ENCODE measurements at regions of chr13 and their contacts with region 1.

Region 1: DNA sequence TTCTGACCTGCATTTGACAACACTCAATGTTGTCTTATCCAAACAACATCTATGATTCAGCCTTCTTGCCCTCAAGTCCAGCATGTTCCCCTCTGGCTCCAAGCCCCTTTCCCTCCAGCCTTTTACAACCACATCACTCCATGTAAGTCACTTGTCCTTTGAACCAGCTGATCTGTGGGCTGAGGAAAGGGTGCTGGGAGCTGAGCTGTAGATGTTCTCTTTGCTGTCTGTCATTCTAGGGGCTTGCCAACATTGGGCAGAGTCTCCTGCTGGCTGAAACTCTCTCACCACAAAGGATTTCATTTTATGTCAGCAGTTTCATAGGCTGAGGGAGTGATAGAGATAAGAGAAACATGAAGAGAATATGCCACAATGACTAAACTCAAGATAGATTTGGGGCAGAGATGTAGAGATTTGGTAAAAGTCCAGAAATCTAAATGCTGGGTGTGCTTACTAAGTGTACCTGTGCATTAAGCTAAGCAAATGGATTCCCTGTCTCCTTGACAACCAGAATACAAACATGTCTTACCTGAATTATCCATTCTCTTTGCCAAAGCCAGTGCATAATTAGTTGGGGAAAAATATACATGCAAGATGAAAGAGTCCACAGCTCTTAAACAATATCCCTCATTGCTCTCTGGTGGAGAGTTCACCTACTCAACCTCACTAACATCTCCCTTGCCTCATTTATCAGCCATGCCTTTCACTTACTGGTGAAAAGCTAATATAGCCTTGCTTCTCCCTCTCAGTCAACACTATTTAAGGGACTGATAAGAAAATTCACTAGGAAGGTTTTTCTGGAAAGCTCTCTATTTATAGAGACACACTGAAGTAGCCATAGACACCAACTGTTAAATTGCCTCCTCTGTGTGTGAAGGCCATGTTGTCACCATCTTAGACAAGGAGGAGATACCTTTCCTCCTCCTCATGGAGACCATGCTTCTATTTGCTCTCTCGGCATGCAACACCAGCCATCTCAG is 175.5 kb upstream of the SERP2 start:
- DNase-seq: peak; percentile 50
- H3K4me3 Mint-ChIP-seq: no peak overlapping the region
- H3K27ac Mint-ChIP-seq: peak overlapping the region; percentile 37
- H3K4me1 Mint-ChIP-seq: peaks cover 47% of the 10 kb centered on the region
- H3K27me3 Mint-ChIP-seq: peaks cover 32% of the 10 kb centered on the region

Region 2: DNA sequence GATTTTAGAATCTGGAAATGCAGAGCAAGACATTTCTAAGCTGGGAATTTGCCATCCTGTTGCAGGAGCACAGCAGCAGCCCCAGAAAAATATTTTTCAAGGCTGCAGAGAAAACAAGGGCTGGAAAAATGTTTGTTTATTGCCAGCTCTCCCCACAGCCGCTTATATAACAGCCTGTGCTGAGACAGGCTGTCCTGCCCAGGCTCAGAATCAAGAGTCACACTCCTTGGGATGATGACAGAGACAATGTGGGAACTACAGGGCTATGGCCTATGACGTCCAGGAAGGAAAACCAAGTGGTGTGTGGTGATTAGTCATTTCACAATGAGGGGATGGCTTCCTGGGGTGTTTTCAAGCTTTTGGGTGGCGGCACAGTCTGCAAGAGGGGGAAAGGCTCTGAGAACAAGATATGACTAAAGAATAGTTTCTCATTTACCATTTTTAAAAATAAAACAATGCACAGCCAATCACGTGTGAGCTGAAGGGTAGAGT is 39.2 kb after region 1 on chr13:
- intact Hi-C with region 1: loop called (anchors 2 kb)
- DNase-seq: no peak
- H3K4me3 Mint-ChIP-seq: peak overlapping the region; percentile 37
- H3K27ac Mint-ChIP-seq: no peak overlapping the region
- H3K4me1 Mint-ChIP-seq: peaks cover 15% of the 10 kb centered on the region
- H3K27me3 Mint-ChIP-seq: peaks cover 42% of the 10 kb centered on the region

Region 3: GRCh38 chr13:44300895-44301638 is 103.0 kb after region 1 on chr13:
- intact Hi-C with region 1: loop called (anchors 1 kb)
- DNase-seq: no peak
- H3K4me3 Mint-ChIP-seq: peak overlapping the region; percentile 5
- H3K27ac Mint-ChIP-seq: peak overlapping the region; percentile 27
- H3K4me1 Mint-ChIP-seq: peaks cover 51% of the 10 kb centered on the region
- H3K27me3 Mint-ChIP-seq: peaks cover 3% of the 10 kb centered on the region

Region 4: DNA sequence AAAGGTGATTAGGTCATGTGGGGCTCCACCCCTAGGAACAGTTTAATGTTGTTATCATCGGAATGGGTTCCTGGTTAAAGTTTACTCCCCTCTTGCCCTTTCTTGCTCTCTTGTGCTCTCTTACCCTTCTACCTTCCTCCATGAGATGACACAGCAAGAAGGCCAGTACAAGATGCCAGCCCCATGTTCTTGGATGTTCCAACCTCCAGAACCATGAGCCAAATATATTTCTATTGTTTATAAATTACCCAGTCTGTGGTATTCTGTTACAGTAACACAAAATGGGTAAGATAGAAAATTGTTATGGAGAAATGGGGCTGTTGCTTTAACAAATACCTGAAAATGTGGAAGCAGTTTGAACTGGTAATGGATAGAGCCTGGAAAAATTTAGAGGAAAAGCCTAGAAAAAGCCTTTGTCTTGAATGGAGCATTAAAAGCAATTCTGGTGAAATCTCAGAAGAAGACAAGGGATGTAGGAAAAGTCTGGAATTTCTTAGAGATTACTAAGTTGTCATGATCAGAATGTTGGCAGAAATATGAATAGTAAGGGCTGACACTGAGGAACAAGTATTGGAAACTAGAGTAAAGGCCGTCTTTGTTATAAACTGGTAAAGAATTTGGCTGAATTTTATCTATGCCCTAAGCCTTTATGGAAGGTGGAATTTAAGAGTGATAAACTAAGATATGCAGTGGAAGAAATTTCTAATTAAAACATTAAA is 431.5 kb after region 1 on chr13:
- intact Hi-C with region 1: no loop called
- DNase-seq: no peak
- H3K4me3 Mint-ChIP-seq: no peak overlapping the region
- H3K27ac Mint-ChIP-seq: no peak overlapping the region
- H3K4me1 Mint-ChIP-seq: no peaks in the 10 kb centered on the region
- H3K27me3 Mint-ChIP-seq: peaks cover 4% of the 10 kb centered on the region

Region 5: DNA sequence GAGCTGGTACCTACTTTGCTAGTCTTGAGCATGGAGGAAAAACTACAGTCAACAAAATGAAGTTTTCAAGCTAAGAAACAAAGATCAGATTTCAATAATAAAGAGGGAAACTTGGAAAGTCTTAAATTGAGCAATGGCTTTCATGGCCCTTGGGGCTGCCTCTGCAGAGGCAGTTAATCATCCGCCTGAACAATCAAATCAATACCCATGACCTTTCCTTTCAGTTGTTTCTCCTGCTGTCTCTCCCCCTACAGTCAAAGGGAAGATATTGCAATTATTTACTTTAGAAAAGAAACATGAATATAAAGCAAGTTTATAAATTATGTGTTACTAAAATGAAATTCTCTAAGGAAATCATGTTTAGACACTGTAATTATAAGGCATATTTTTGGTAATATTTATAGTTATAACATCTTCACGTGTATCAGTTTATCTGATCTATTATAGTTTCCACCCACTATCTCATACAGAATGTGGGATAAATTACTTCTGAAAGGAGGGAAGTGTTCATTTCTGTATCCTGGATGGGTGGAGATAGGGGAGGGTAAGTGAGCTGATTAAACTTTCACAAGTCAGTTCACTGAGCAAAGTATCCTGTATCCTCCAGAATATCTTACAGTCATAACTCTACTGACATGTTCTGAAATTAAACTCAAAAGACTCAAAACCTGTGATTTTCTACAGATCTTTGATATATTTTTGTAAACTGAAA is 450.5 kb after region 1 on chr13:
- intact Hi-C with region 1: loop called (anchors 1 kb)
- DNase-seq: no peak
- H3K4me3 Mint-ChIP-seq: no peak overlapping the region
- H3K27ac Mint-ChIP-seq: peak overlapping the region; percentile 37
- H3K4me1 Mint-ChIP-seq: peaks cover 21% of the 10 kb centered on the region
- H3K27me3 Mint-ChIP-seq: peaks cover 9% of the 10 kb centered on the region

Region 6: GRCh38 chr13:44815623-44816022 is 617.5 kb after region 1 on chr13:
- intact Hi-C with region 1: loop called (anchors 5 kb)
- DNase-seq: peak; percentile 10
- H3K4me3 Mint-ChIP-seq: no peak overlapping the region
- H3K27ac Mint-ChIP-seq: peak overlapping the region; percentile 8
- H3K4me1 Mint-ChIP-seq: peaks cover 29% of the 10 kb centered on the region
- H3K27me3 Mint-ChIP-seq: peaks cover 12% of the 10 kb centered on the region

Region 7: GRCh38 chr13:44879463-44880058 is 681.5 kb after region 1 on chr13:
- intact Hi-C with region 1: no loop called
- DNase-seq: no peak
- H3K4me3 Mint-ChIP-seq: no peak overlapping the region
- H3K27ac Mint-ChIP-seq: no peak overlapping the region
- H3K4me1 Mint-ChIP-seq: peaks cover 11% of the 10 kb centered on the region
- H3K27me3 Mint-ChIP-seq: no peaks in the 10 kb centered on the region